ENCODE measurements at regions of chr14 and their contacts with region 1.

Region 1: GRCh38 chr14:78417532-78417931 is 247.4 kb downstream of the NRXN3 start:
- DNase-seq: no peak
- ATAC-seq: no peak
- H3K4me3 ChIP-seq: no peak overlapping the region
- H3K27ac ChIP-seq: no peak overlapping the region
- H3K4me1 ChIP-seq: no peaks in the 10 kb centered on the region
- H3K27me3 ChIP-seq: no peaks in the 10 kb centered on the region
- CTCF ChIP-seq: no peak
- EP300 ChIP-seq: no peak
- POLR2A ChIP-seq: no peak
- RAD21 ChIP-seq: no peak

Region 2: DNA sequence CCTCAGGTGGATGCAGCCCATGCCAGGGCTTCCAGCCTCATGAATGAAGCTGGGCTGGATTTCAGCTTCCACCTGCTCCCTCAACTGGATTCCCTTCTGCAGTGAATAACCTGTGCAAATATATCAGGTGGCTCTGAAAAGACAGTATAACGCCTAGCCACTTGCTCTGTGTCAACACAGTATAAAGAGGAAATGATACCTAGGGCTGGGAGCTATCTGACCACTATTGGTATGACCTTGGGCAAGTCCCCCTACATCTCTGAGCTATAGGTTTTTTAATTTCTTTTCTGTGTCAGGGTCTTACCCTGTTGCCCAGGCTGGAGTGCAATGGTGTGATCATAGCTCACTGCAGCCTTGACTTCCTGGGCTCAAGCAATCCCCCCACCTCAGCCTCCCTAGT is 938.7 kb before region 1 on chr14:
- CTCF ChIA-PET with region 1: no interaction called
- POLR2A ChIA-PET with region 1: no interaction called
- in situ Hi-C with region 1: no loop called
- intact Hi-C with region 1: no loop called
- DNase-seq: no peak
- ATAC-seq: no peak
- H3K4me3 ChIP-seq: no peak overlapping the region
- H3K27ac ChIP-seq: no peak overlapping the region
- H3K4me1 ChIP-seq: no peaks in the 10 kb centered on the region
- H3K27me3 ChIP-seq: no peaks in the 10 kb centered on the region
- CTCF ChIP-seq: no peak
- EP300 ChIP-seq: no peak
- POLR2A ChIP-seq: no peak
- RAD21 ChIP-seq: no peak

Region 3: GRCh38 chr14:78345131-78345744 is 72.3 kb before region 1 on chr14:
- CTCF ChIA-PET with region 1: no interaction called
- POLR2A ChIA-PET with region 1: no interaction called
- in situ Hi-C with region 1: no loop called
- intact Hi-C with region 1: no loop called
- DNase-seq: no peak
- ATAC-seq: no peak
- H3K4me3 ChIP-seq: no peak overlapping the region
- H3K27ac ChIP-seq: no peak overlapping the region
- H3K4me1 ChIP-seq: no peaks in the 10 kb centered on the region
- H3K27me3 ChIP-seq: peaks cover 0 to 3% of the 10 kb centered on the region in 2 experiments; a peak in 1 of 5 replicates
- CTCF ChIP-seq: no peak
- EP300 ChIP-seq: no peak
- POLR2A ChIP-seq: no peak
- RAD21 ChIP-seq: no peak

Region 4: GRCh38 chr14:78367355-78367754 is 50.2 kb before region 1 on chr14:
- CTCF ChIA-PET with region 1: no interaction called
- POLR2A ChIA-PET with region 1: no interaction called
- in situ Hi-C with region 1: no loop called
- intact Hi-C with region 1: loop called (anchors 1 kb)
- DNase-seq: no peak
- ATAC-seq: no peak
- H3K4me3 ChIP-seq: no peak overlapping the region
- H3K27ac ChIP-seq: no peak overlapping the region
- H3K4me1 ChIP-seq: no peaks in the 10 kb centered on the region
- H3K27me3 ChIP-seq: no peaks in the 10 kb centered on the region
- CTCF ChIP-seq: no peak
- EP300 ChIP-seq: no peak
- POLR2A ChIP-seq: no peak
- RAD21 ChIP-seq: no peak